Activated CD8-positive, alpha-beta memory T cell treated with anti-CD3 and anti-CD28 coated beads, Interleukin-2, amount 10 ng/mL, durations not matched to agents 7 days and 5 days (primary cell): ENCODE measurements at regions of chr19 and their contacts with region 1.

Region 1: DNA sequence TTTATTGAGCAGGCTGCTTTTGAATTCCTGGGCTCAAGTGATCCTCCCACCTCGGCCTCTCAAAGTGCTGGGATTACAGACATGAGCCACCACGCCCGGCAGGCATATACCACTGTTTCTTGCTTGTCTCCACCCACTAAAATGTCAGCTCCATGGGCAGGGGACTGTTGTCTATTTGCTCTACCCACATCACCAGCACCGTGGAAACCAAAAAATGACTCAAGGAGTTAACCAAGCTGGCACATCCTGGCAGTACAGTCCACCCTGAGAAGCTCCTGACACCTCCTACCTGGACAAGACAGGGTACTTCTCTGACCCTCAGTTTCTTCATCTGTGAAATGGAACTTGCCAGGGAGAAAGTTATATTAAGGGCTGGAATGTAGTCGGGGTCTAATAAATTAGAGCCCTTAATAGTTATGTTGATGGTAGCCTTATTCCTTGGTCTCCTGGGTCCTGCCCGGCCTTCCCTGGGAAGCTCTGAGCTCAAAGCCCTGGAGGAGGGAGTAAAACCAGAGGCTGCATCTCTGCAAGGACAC is 13.9 kb downstream of the RDH8 start:
- DNase-seq: no peak
- ATAC-seq: no peak
- H3K4me3 Mint-ChIP-seq: no peak overlapping the region
- H3K27ac Mint-ChIP-seq: no peak overlapping the region
- H3K4me1 Mint-ChIP-seq: no peaks in the 10 kb centered on the region
- H3K27me3 Mint-ChIP-seq: peaks cover 25% of the 10 kb centered on the region

Region 2: GRCh38 chr19:9906475-9907087 is 120.6 kb before region 1 on chr19:
- CTCF ChIA-PET with region 1: no interaction called
- DNase-seq: no peak
- ATAC-seq: no peak
- H3K4me3 Mint-ChIP-seq: no peak overlapping the region
- H3K27ac Mint-ChIP-seq: no peak overlapping the region
- H3K4me1 Mint-ChIP-seq: no peaks in the 10 kb centered on the region
- H3K27me3 Mint-ChIP-seq: peaks cover 14% of the 10 kb centered on the region

Region 3: DNA sequence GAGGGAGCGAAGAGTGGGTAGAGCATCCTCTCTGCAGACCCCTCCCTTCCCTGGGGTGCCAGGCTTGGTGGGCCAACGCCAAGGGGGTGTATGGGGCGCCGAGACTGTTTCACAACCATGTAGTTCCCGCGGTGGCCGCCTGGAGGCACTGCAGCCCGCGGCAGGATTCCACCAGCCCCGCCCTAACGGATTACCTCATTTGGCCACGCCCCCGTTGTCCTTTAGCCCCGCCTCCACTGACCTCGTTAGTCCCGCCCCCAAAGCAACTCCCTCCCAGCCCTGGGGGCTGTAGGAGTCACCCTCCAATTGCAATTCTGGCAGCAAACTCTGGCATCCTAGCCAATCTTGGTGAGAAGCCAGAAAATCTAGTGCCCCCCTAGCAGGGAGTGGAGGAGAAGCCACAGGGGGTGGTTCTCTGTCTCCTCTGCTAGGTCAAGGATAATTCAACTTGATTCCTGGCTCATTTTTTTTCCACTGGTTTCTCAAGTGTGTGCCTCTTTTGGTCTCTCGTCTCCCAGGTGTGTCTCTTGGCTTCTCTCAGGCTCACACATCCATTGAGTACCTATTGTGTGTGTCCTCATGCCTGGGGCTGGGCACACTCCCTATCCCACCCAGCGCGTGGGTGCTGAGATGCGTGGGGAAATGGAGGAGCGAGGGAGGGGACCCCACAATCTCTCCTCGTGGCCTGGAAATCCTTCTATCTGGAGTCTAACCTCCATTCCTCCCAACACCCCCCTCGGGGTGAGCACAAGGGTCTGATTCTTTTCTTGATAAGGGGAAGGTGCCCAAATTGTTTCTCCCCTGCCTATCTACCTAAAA is 92.9 kb before region 1 on chr19:
- CTCF ChIA-PET with region 1: interaction called, 56 read pairs
- DNase-seq: peak; percentile 86
- ATAC-seq: peak; percentile 83
- H3K4me3 Mint-ChIP-seq: no peak overlapping the region
- H3K27ac Mint-ChIP-seq: no peak overlapping the region
- H3K4me1 Mint-ChIP-seq: peaks cover 14% of the 10 kb centered on the region
- H3K27me3 Mint-ChIP-seq: peaks cover 47% of the 10 kb centered on the region

Region 4: GRCh38 chr19:10010247-10010691 is 17.0 kb before region 1 on chr19 and contains the start of gene COL5A3:
- CTCF ChIA-PET with region 1: interaction called, 14 read pairs
- DNase-seq: no peak
- ATAC-seq: no peak
- H3K4me3 Mint-ChIP-seq: no peak within 1 kb of the TSS
- H3K27ac Mint-ChIP-seq: no peak within 1 kb of the TSS
- H3K4me1 Mint-ChIP-seq: peaks cover 17% of the 10 kb centered on the region
- H3K27me3 Mint-ChIP-seq: peaks cover 52% of the 10 kb centered on the region
- total RNA-seq, gene COL5A3: 0.09 TPM in 1 of 2 experiments, not detected in the other